ENCODE measurements at regions of chr1 and their contacts with region 1.

Region 1: GRCh38 chr1:62082456-62083363 is 111.9 kb upstream of the L1TD1 start:
- DNase-seq: peak; percentile 55
- H3K4me3 ChIP-seq: no peak overlapping the region
- H3K27ac ChIP-seq: no peak overlapping the region
- H3K4me1 ChIP-seq: no peaks in the 10 kb centered on the region
- H3K27me3 ChIP-seq: no peaks in the 10 kb centered on the region
- CTCF ChIP-seq: peak; percentile 83 to 89
- POLR2A ChIP-seq: no peak

Region 2: DNA sequence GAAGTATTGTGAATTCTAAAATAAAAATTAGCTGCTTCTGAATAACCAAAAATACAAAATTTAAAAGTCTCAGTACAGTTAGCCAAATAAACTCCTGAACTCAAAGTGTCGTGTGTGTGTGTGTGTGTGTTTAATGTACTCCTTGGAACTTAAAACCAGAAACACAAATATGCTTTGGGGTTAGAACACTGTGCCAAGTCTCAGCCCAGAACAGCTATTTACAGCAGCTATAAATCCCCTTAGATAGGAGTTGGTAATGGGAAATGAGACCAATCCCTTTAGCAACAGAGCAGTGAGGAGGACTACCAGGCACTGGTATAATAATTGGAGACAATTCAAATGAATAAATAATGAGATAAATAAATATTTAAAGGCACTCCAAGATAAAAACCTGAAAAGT is 257.3 kb before region 1 on chr1:
- CTCF ChIA-PET with region 1: no interaction called
- POLR2A ChIA-PET with region 1: no interaction called
- dilution Hi-C with region 1: no loop called
- intact Hi-C with region 1: no loop called
- DNase-seq: no peak
- H3K4me3 ChIP-seq: no peak overlapping the region
- H3K27ac ChIP-seq: no peak overlapping the region
- H3K4me1 ChIP-seq: peaks cover 4% of the 10 kb centered on the region
- H3K27me3 ChIP-seq: no peaks in the 10 kb centered on the region
- CTCF ChIP-seq: no peak
- POLR2A ChIP-seq: no peak

Region 3: DNA sequence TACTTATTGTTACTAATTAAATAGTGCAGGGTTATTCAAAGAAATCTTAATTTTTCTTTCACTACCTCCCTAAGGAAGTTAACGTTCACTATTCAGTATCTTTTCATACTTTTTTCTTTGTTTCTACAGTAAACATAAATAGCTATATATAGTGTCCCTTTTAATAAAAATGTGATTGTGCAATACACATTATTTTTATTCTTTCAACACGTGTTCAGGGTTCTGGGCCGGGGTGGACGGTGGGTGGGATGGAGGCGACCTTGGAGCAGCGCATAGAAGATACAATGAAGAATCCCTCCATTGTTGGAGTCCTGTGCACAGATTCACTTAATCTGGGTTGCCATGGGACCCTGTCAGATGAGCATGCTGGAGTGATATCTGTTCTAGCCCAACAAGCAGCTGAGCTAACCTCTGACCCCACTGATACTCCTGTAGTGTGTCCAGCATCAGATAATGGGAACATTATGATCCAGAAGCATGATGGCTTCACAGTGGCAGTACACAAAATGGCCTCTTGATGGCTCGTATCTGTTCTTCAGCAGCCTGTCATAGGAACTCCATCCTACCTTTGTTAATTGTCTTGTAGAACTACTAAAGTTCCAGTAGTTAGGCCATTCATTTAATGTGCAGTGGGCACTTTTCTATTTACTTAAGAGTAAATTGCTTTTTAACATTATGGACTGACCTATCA is 44.0 kb before region 1 on chr1:
- CTCF ChIA-PET with region 1: no interaction called
- POLR2A ChIA-PET with region 1: no interaction called
- dilution Hi-C with region 1: no loop called
- intact Hi-C with region 1: loop called (anchors 1 kb)
- DNase-seq: no peak
- H3K4me3 ChIP-seq: no peak overlapping the region
- H3K27ac ChIP-seq: no peak overlapping the region
- H3K4me1 ChIP-seq: no peaks in the 10 kb centered on the region
- H3K27me3 ChIP-seq: no peaks in the 10 kb centered on the region
- CTCF ChIP-seq: no peak
- POLR2A ChIP-seq: no peak

Region 4: DNA sequence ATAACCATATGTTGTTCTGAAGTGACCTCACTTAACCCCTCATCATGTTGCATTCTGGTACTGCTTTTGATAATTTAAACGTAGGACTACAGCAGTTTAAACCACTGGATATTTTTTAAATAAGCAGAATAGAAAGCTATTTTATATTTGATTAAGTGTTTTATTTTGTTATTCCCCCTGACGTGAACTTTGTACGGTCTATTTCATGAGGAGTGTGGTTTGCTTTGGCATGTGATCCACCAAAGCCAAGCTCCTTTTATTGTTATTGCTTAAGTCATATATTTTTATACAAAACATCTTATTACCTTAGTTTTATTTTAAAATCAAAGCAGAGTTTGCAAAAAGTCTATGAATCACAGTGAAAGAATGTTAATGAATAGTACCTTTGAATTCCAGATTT is 10.6 kb after region 1 on chr1:
- CTCF ChIA-PET with region 1: interaction called, 16 read pairs
- POLR2A ChIA-PET with region 1: no interaction called
- dilution Hi-C with region 1: no loop called
- intact Hi-C with region 1: no loop called
- DNase-seq: peak; percentile 10
- H3K4me3 ChIP-seq: no peak overlapping the region
- H3K27ac ChIP-seq: no peak overlapping the region
- H3K4me1 ChIP-seq: peaks cover 6% of the 10 kb centered on the region
- H3K27me3 ChIP-seq: no peaks in the 10 kb centered on the region
- CTCF ChIP-seq: no peak
- POLR2A ChIP-seq: no peak

Region 5: DNA sequence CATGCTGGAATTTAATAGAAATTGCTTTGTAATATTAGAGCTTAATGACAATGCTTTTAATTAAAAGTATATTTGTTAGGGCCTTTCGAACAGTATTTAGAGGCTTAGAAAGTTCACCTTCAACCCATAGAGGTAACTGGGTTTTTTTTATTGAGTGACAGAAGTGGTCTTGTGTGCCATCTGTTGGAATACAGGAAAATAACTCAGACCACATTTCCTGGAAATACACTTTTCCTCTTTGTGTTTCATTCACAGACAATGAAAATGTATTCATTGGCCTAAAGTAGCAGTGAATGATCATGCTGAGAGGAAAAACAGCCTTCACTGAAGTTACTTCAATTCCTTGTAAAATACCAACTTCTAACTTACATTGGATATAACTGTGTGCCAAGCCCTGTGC is 28.4 kb after region 1 on chr1:
- CTCF ChIA-PET with region 1: interaction called, 4 read pairs
- POLR2A ChIA-PET with region 1: no interaction called
- dilution Hi-C with region 1: no loop called
- intact Hi-C with region 1: loop called (anchors 1 kb)
- DNase-seq: peak; percentile 14
- H3K4me3 ChIP-seq: no peak overlapping the region
- H3K27ac ChIP-seq: no peak overlapping the region
- H3K4me1 ChIP-seq: peaks cover 3% of the 10 kb centered on the region
- H3K27me3 ChIP-seq: no peaks in the 10 kb centered on the region
- CTCF ChIP-seq: no peak
- POLR2A ChIP-seq: no peak

Region 6: GRCh38 chr1:62131093-62131725 is 48.5 kb after region 1 on chr1:
- CTCF ChIA-PET with region 1: interaction called, 50 read pairs
- POLR2A ChIA-PET with region 1: no interaction called
- dilution Hi-C with region 1: no loop called
- intact Hi-C with region 1: loop called (anchors 1 kb)
- DNase-seq: peak; percentile 56
- H3K4me3 ChIP-seq: no peak overlapping the region
- H3K27ac ChIP-seq: no peak overlapping the region
- H3K4me1 ChIP-seq: no peaks in the 10 kb centered on the region
- H3K27me3 ChIP-seq: no peaks in the 10 kb centered on the region
- CTCF ChIP-seq: peak; percentile 80 to 85
- POLR2A ChIP-seq: no peak

Region 7: DNA sequence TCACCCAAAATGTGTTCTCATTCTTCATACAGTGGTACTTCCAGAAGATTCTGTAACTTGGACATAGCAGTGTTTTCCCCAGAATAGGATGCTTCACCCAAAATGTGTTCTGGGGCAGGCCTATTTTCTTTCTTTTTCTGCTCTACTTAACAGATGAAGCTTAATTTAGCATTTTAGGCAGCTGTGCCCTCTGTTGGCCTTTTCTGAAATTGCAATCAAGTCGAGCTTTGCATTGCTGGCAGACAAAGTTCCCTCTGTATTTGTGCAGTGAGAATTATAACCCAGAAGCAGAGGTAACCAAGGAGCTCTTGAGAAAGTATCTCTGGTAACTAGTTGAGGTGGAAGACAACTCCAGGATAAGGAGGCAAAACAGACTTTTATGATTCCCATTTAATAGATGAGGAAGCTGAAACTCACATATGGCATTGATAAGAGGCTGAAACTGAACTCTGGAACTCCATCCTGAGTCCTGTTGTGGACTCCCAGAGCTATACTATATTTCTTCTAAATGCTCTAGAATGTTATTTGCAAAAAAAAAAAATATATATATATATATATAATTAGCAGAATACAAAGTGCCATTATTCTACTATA is 61.6 kb after region 1 on chr1:
- CTCF ChIA-PET with region 1: interaction called, 41 read pairs
- POLR2A ChIA-PET with region 1: no interaction called
- dilution Hi-C with region 1: no loop called
- intact Hi-C with region 1: no loop called
- DNase-seq: peak; percentile 59
- H3K4me3 ChIP-seq: no peak overlapping the region
- H3K27ac ChIP-seq: no peak overlapping the region
- H3K4me1 ChIP-seq: no peaks in the 10 kb centered on the region
- H3K27me3 ChIP-seq: no peaks in the 10 kb centered on the region
- CTCF ChIP-seq: peak; percentile 53 to 70
- POLR2A ChIP-seq: no peak

Region 8: GRCh38 chr1:62407405-62408009 is 324.8 kb after region 1 on chr1:
- CTCF ChIA-PET with region 1: interaction called, 3 read pairs
- POLR2A ChIA-PET with region 1: no interaction called
- dilution Hi-C with region 1: no loop called
- intact Hi-C with region 1: loop called (anchors 1 kb)
- DNase-seq: peak; percentile 46
- H3K4me3 ChIP-seq: no peak overlapping the region
- H3K27ac ChIP-seq: no peak overlapping the region
- H3K4me1 ChIP-seq: no peaks in the 10 kb centered on the region
- H3K27me3 ChIP-seq: no peaks in the 10 kb centered on the region
- CTCF ChIP-seq: peak; percentile 55 to 56
- POLR2A ChIP-seq: no peak

Measured in endothelial cell of umbilical vein (primary cell).